Activated CD4-positive, alpha-beta memory T cell treated with anti-CD3 and anti-CD28 coated beads for 36 hours (primary cell): ENCODE measurements at regions of chr4 and their contacts with region 1.

Region 1: DNA sequence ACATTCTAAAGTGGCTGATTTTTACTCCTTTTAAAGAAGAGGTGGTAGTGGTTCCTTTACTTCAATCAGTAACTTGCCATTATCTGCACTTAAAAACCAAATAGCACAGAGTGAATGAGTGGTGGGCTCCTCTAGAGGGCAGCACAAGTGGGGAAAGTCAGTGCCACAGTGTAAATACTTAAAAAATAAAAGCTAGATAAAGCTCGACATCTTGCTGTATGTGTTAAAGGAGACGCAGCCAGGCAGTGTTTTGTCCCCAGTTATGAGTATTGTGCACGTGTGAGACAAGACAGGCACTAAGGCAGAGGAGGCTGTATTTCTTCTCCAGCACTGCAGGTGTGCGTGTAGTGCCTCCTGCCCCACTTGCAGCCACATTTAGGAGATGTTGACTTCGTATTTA is 24.6 kb downstream of the NAP1L5 start:
- DNase-seq: peak; percentile 39
- H3K4me3 Mint-ChIP-seq: no peak overlapping the region
- H3K27ac Mint-ChIP-seq: no peak overlapping the region
- H3K4me1 Mint-ChIP-seq: peaks cover 6% of the 10 kb centered on the region
- H3K27me3 Mint-ChIP-seq: no peaks in the 10 kb centered on the region

Region 2: DNA sequence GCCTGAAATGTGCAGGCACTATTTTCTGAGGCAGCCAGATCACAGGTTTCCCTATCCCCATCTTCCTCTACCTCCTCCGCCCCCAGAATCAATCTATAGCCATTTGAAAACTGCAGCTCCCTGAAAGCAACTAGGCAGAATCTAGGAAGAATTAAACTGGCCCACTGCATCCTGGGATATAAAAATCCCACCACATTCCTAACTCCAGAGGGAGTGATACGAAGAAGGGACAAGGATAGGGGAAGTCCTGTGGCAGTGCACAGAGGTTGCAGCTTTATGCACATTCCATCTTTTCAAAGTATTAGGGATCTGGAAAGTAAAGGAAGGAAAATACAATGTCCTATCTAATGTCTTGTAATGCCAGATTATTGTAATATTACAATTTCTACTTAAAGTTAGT is 99.0 kb before region 1 on chr4:
- CTCF ChIA-PET with region 1: no interaction called
- POLR2A ChIA-PET with region 1: no interaction called
- intact Hi-C with region 1: no loop called
- DNase-seq: no peak
- H3K4me3 Mint-ChIP-seq: no peak overlapping the region
- H3K27ac Mint-ChIP-seq: no peak overlapping the region
- H3K4me1 Mint-ChIP-seq: no peaks in the 10 kb centered on the region
- H3K27me3 Mint-ChIP-seq: peaks cover 6% of the 10 kb centered on the region

Region 3: GRCh38 chr4:89024051-89024675 is 351.2 kb after region 1 on chr4:
- CTCF ChIA-PET with region 1: interaction called, 5 read pairs
- POLR2A ChIA-PET with region 1: no interaction called
- intact Hi-C with region 1: loop called (anchors 1 kb)
- DNase-seq: peak; percentile 33
- H3K4me3 Mint-ChIP-seq: no peak overlapping the region
- H3K27ac Mint-ChIP-seq: no peak overlapping the region
- H3K4me1 Mint-ChIP-seq: peaks cover 5% of the 10 kb centered on the region
- H3K27me3 Mint-ChIP-seq: no peaks in the 10 kb centered on the region